RWPE1 (cell line): ENCODE measurements at regions of chr1 and their contacts with region 1.

Region 1: GRCh38 chr1:184892116-184892515 is 82.2 kb downstream of the NIBAN1 start:
- DNase-seq: no peak
- H3K27ac ChIP-seq: no peak overlapping the region
- CTCF ChIP-seq: no peak

Region 2: GRCh38 chr1:183792300-183792699 is 1099.8 kb before region 1 on chr1:
- CTCF ChIA-PET with region 1: no interaction called
- POLR2A ChIA-PET with region 1: no interaction called
- DNase-seq: no peak
- H3K27ac ChIP-seq: no peak overlapping the region
- CTCF ChIP-seq: no peak

Region 3: GRCh38 chr1:185014941-185015340 is 122.8 kb after region 1 on chr1:
- CTCF ChIA-PET with region 1: interaction called, 10 read pairs
- POLR2A ChIA-PET with region 1: no interaction called
- DNase-seq: no peak
- H3K27ac ChIP-seq: no peak overlapping the region
- CTCF ChIP-seq: no peak